ENCODE measurements at regions of chr20 and their contacts with region 1.

Region 1: DNA sequence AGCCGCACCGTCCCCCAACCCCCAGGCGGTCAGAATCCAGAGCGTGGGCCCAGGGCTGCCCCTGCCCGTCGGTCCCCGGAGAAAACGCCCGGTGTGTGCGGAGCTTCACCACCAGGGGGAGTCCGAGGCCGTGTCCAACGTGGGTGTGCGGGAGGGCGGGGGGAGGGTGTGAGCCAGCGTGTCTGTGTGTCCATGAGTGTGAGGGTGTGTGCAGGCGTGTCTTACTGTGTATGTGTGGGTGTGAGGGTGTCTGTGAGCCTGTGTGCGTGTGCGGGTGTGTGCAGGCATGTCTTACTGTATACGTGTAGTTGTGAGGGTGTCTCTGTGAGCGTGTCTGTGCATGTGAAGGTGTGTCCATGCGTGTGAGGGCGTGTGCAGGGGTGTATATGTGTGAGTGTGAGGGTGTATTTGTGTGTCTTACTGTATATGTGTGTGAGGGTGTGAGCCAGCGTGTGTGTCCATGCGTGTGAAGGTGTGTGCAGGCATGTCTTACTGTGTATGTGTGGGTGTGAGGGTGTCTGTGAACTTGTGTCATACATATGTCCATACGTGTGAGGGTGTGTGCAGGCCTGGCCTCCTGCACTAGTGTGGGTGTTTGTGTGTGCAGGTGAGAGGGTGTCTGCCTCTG is 24.6 kb upstream of the GATA5 start:
- DNase-seq: peak; percentile 87
- H3K4me3 Mint-ChIP-seq: no peak overlapping the region
- H3K27ac Mint-ChIP-seq: peak overlapping the region; percentile 26
- H3K4me1 Mint-ChIP-seq: peaks cover 29% of the 10 kb centered on the region
- H3K27me3 Mint-ChIP-seq: peaks cover 3% of the 10 kb centered on the region

Region 2: GRCh38 chr20:62407221-62407992 is 92.9 kb before region 1 on chr20 and contains the start of gene CABLES2:
- CTCF ChIA-PET with region 1: interaction called, 5 read pairs
- POLR2A ChIA-PET with region 1: no interaction called
- intact Hi-C with region 1: loop called (anchors 5 kb)
- DNase-seq: peak; percentile 95
- H3K4me3 Mint-ChIP-seq: peak within 1 kb of the TSS; percentile 78
- H3K27ac Mint-ChIP-seq: peak within 1 kb of the TSS; percentile 69
- H3K4me1 Mint-ChIP-seq: peaks cover 23% of the 10 kb centered on the region
- H3K27me3 Mint-ChIP-seq: no peaks in the 10 kb centered on the region
- total RNA-seq, gene CABLES2: 7.8 to 8.2 TPM

Region 3: DNA sequence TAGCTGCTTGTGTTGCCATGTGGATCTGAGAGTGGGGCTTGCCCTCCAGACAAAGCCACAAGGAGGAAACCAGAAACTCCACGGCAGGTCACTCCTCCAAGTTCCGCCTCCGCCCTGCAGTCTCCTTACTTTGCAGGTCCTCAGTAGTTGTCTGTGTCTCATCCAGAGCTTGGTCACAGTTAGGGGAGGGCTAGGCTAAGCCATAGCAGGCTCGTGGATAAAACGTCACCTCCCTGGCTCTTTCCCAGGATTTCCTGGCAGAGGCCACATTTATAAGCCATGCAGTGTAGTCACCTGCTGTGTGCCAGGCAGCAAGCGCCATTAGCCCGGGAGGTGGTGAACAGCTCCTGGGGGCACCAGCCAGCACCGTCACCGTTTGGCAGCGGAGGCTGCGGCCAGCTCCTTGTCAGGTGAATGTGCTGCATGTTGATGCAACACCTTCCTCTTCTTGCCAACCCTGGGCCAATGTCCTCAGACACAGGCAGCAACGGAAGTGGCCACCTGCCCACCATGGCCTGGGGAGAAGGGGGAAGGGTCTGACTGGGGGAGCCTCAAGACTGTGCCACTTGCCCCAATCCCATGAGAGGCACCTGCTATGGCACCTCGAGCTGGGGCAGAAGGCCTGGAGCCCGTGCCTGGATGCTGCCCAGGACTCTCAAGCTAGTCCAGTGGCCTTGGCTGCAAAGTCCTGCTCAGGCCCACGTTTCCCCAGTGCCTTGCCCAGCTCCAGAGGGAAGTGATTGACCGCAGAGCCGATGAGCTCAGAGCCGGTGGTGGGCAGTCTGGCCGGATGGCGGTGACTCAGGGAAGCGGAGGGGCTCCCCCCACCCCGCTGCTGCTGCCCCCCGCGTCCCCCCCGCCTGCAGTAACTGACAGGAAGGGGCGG is 102.9 kb after region 1 on chr20:
- CTCF ChIA-PET with region 1: interaction called, 8 read pairs
- POLR2A ChIA-PET with region 1: no interaction called
- intact Hi-C with region 1: loop called (anchors 5 kb)
- DNase-seq: peak; percentile 79
- H3K4me3 Mint-ChIP-seq: peak overlapping the region; percentile 46
- H3K27ac Mint-ChIP-seq: peak overlapping the region; percentile 44
- H3K4me1 Mint-ChIP-seq: peaks cover 19% of the 10 kb centered on the region
- H3K27me3 Mint-ChIP-seq: peaks cover 12% of the 10 kb centered on the region

Region 4: DNA sequence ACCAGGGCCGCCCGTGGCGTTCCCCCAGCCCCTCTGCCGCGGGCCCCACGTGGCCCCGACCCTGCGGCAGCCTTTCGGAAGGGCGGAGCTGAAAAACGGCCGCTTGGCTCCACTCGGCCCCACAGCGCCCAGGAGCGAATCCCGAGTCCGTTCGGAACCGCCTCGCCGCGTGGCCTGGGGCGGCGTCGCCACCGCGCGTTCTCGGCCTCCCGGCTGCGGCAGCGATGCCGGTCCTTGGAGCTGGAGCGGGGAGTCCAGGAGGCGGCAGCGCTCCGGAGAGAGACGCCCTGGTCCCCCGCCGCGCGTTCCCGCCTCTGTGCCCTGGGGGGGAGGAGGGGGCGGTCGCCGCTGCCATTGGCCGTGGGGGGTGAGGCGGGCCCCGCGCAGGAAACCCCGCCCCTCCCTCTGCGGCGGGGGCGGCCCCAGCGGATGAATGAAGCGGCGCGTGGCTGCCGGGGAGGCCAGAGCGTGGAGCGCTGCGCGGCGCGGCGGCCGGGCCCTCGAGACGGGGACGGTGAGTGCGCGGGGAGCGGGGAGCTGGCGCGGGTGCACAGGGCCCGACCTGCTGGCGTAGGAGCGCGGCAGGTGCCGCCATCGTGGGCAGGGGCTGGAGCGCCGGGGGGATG is 141.8 kb after region 1 on chr20 and contains the start of gene SLCO4A1:
- CTCF ChIA-PET with region 1: interaction called, 10 read pairs
- POLR2A ChIA-PET with region 1: interaction called, 3 read pairs
- intact Hi-C with region 1: no loop called
- DNase-seq: peak; percentile 90
- H3K4me3 Mint-ChIP-seq: peak within 1 kb of the TSS; percentile 77
- H3K27ac Mint-ChIP-seq: peak within 1 kb of the TSS; percentile 67
- H3K4me1 Mint-ChIP-seq: no peaks in the 10 kb centered on the region
- H3K27me3 Mint-ChIP-seq: no peaks in the 10 kb centered on the region
- total RNA-seq, gene SLCO4A1: 29.6 to 30.7 TPM

Region 5: GRCh38 chr20:62740286-62741141 is 240.2 kb after region 1 on chr20:
- CTCF ChIA-PET with region 1: no interaction called
- POLR2A ChIA-PET with region 1: no interaction called
- intact Hi-C with region 1: loop called (anchors 5 kb)
- DNase-seq: peak; percentile 95
- H3K4me3 Mint-ChIP-seq: peak overlapping the region; percentile 48
- H3K27ac Mint-ChIP-seq: peak overlapping the region; percentile 82
- H3K4me1 Mint-ChIP-seq: peaks cover 44% of the 10 kb centered on the region
- H3K27me3 Mint-ChIP-seq: no peaks in the 10 kb centered on the region

Measured in activated CD4-positive, alpha-beta memory T cell treated with anti-CD3 and anti-CD28 coated beads for 36 hours (primary cell).